ENCODE measurements at regions of chr12 and their contacts with region 1.

Region 1: GRCh38 chr12:49967042-49967776 is 5.5 kb downstream of the AQP5 start:
- DNase-seq: peak; percentile 94
- H3K4me3 Mint-ChIP-seq: peak overlapping the region; percentile 51
- H3K27ac Mint-ChIP-seq: no peak overlapping the region
- H3K4me1 Mint-ChIP-seq: peaks cover 2% of the 10 kb centered on the region
- H3K27me3 Mint-ChIP-seq: peaks cover 32% of the 10 kb centered on the region

Region 2: GRCh38 chr12:49296034-49296835 is 671.0 kb before region 1 on chr12:
- CTCF ChIA-PET with region 1: no interaction called
- POLR2A ChIA-PET with region 1: no interaction called
- intact Hi-C with region 1: no loop called
- DNase-seq: peak; percentile 75
- H3K4me3 Mint-ChIP-seq: no peak overlapping the region
- H3K27ac Mint-ChIP-seq: no peak overlapping the region
- H3K4me1 Mint-ChIP-seq: peaks cover 12% of the 10 kb centered on the region
- H3K27me3 Mint-ChIP-seq: peaks cover 51% of the 10 kb centered on the region

Region 3: GRCh38 chr12:49776413-49776812 is 190.8 kb before region 1 on chr12:
- CTCF ChIA-PET with region 1: interaction called, 12 read pairs
- POLR2A ChIA-PET with region 1: no interaction called
- intact Hi-C with region 1: loop called (anchors 2 kb)
- DNase-seq: peak; percentile 79
- H3K4me3 Mint-ChIP-seq: no peak overlapping the region
- H3K27ac Mint-ChIP-seq: no peak overlapping the region
- H3K4me1 Mint-ChIP-seq: peaks cover 13% of the 10 kb centered on the region
- H3K27me3 Mint-ChIP-seq: peaks cover 14% of the 10 kb centered on the region

Region 4: GRCh38 chr12:49930515-49931288 is 36.5 kb before region 1 on chr12:
- CTCF ChIA-PET with region 1: interaction called, 17 read pairs
- POLR2A ChIA-PET with region 1: no interaction called
- intact Hi-C with region 1: no loop called
- DNase-seq: no peak
- H3K4me3 Mint-ChIP-seq: no peak overlapping the region
- H3K27ac Mint-ChIP-seq: no peak overlapping the region
- H3K4me1 Mint-ChIP-seq: no peaks in the 10 kb centered on the region
- H3K27me3 Mint-ChIP-seq: peaks cover 6% of the 10 kb centered on the region

Region 5: DNA sequence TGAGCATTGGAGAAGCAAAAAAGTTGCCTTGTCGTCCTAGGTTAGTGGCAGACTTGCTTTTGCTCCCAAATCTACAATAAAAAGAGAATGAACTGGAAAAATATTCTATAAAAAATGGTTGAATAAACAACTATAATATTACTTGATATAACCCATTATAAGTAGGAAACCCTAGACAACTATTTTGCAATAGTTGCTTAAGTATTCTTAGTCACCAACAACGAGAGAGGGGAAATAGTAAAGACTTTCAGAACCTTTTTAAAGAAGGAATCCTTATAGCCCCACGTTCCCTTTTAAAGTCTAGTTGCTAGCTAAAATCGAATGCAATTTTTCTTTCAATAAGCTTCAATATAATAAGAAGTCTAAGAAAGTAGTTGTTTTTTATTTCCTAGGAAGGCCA is 23.1 kb after region 1 on chr12:
- CTCF ChIA-PET with region 1: interaction called, 107 read pairs
- POLR2A ChIA-PET with region 1: no interaction called
- intact Hi-C with region 1: no loop called
- DNase-seq: no peak
- H3K4me3 Mint-ChIP-seq: no peak overlapping the region
- H3K27ac Mint-ChIP-seq: no peak overlapping the region
- H3K4me1 Mint-ChIP-seq: peaks cover 4% of the 10 kb centered on the region
- H3K27me3 Mint-ChIP-seq: no peaks in the 10 kb centered on the region

Region 6: DNA sequence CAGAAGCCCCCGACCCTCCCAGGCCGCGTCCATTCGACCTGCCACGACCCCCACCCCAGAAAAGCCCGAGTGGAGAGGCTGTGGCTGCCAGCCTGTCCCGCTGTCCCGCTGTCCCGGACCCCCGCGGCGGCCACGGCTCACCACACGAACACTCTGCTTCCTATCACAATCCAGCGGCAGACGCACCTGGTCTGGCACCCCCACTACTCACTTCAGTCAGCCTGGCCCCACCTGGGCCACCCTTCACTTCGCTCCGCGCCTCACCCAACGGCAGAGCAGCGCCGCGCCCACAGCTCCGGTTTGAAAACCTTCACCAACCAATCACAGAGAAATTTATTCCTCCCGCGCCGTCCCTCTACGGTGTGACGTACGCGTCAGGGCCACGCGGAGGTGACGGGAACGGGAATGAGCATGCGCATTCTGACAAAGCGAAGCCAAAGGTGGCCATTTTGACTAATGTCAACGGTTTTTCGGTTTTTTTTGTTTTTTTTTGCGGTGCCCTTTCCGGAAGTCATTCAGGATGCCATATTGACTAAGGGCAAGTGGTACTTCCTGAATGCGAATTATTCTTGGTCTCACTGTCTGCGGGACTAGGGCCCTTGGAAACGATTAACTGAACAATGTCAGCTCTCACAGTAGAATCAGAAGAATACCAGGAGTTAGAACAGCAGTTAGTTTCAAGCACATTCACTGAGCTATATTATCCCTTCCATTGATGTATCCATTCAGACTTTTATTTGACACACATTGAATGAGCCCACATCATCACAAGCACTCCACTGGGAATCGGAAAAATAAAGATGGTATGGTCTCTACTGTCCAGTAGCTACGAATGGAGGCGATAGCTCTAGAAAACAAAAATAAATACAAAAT is 58.2 kb after region 1 on chr12 and contains the start of gene RACGAP1:
- CTCF ChIA-PET with region 1: interaction called, 17 read pairs
- POLR2A ChIA-PET with region 1: no interaction called
- intact Hi-C with region 1: no loop called
- DNase-seq: peak; percentile 98
- H3K4me3 Mint-ChIP-seq: peak within 1 kb of the TSS; percentile 94
- H3K27ac Mint-ChIP-seq: peak within 1 kb of the TSS; percentile 91
- H3K4me1 Mint-ChIP-seq: peaks cover 14% of the 10 kb centered on the region
- H3K27me3 Mint-ChIP-seq: peaks cover 2% of the 10 kb centered on the region
- total RNA-seq, gene RACGAP1: 145 to 152 TPM

Region 7: DNA sequence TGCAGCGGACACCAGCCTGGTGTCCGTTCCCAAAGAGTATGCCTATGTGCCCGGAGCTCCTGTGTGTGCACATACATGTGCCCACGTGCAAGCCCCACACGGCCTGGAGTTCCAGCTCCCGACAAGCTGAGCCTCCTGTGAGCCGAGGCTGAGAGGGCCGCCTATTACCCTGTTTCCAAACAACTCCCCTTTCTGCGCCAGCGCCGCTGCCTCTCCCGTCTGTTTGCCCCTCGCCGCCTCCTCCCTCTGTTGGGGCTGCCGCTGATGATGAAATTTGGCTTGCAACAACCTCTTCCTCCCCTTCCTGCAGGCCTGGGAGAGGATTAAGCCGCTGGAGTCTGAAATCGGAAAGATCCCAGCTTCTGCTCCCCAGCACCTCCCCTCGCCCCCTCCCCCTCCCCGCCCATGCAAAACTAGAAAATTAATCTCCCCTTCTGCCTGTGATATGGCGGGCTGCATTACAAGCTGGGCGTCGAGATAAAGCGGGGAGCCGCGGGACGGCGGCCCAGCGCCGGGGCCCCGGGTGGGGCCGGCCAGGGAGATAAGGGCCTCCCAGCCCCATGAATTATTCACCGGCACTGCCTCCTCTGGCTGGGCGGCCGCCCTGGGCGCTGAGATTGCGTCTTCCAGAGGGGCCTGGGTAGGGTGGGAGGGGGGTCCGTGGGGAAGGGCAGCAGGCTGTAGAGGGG is 83.3 kb after region 1 on chr12:
- CTCF ChIA-PET with region 1: interaction called, 127 read pairs
- POLR2A ChIA-PET with region 1: no interaction called
- intact Hi-C with region 1: no loop called
- DNase-seq: no peak
- H3K4me3 Mint-ChIP-seq: no peak overlapping the region
- H3K27ac Mint-ChIP-seq: no peak overlapping the region
- H3K4me1 Mint-ChIP-seq: peaks cover under 1% of the 10 kb centered on the region
- H3K27me3 Mint-ChIP-seq: peaks cover 40% of the 10 kb centered on the region

Region 8: GRCh38 chr12:50084775-50085614 is 117.8 kb after region 1 on chr12 and contains the start of gene SMARCD1:
- CTCF ChIA-PET with region 1: interaction called, 16 read pairs
- POLR2A ChIA-PET with region 1: no interaction called
- intact Hi-C with region 1: no loop called
- DNase-seq: peak; percentile 91
- H3K4me3 Mint-ChIP-seq: peak within 1 kb of the TSS; percentile 89
- H3K27ac Mint-ChIP-seq: peak within 1 kb of the TSS; percentile 94
- H3K4me1 Mint-ChIP-seq: peaks cover 44% of the 10 kb centered on the region
- H3K27me3 Mint-ChIP-seq: no peaks in the 10 kb centered on the region
- total RNA-seq, gene SMARCD1: 56.1 to 56.3 TPM